Thyroid gland (tissue), 4 donors: ENCODE measurements at regions of chr1 and their contacts with region 1.

Region 1: GRCh38 chr1:145859491-145860023 is 676 bp upstream of the PIAS3 start:
- DNase-seq: peak; percentile 93 to 94
- H3K4me3 ChIP-seq: peak overlapping the region; percentile 21 to 80 (median 78)
- H3K27ac ChIP-seq: peak overlapping the region; percentile 58 to 85 (median 72)
- H3K4me1 ChIP-seq: peaks cover 3 to 16% of the 10 kb centered on the region in 2 donors
- H3K27me3 ChIP-seq: no peaks in the 10 kb centered on the region
- CTCF ChIP-seq: peak in 2 of 6 experiments; percentile 16 to 24
- POLR2A ChIP-seq: peak; percentile 44 to 81

Region 2: DNA sequence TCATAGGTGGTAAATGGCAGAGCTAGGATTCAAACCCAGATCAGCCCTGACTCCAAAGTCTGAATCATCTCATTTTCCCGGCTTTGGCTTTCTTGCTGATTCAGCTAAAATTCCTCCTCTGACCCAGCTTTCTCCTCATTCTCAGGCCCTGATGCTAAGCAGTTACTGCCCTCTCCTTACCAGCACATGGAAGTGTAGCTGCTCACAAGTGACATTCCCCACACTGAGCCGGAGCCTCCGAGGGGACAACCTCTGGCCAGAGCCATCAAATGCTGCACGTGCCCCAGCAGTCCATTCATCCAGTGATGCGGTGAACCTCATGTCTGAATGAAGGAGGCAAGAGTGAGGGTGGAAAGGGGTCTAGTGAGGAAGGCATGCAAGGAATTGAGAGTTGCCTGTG is 39.2 kb after region 1 on chr1:
- intact Hi-C with region 1: loop called (anchors 2 kb)
- DNase-seq: no peak
- H3K4me3 ChIP-seq: no peak overlapping the region
- H3K27ac ChIP-seq: no peak overlapping the region
- H3K4me1 ChIP-seq: no peaks in the 10 kb centered on the region
- H3K27me3 ChIP-seq: no peaks in the 10 kb centered on the region
- CTCF ChIP-seq: no peak
- POLR2A ChIP-seq: no peak